ENCODE measurements at regions of chr7 and their contacts with region 1.

Region 1: DNA sequence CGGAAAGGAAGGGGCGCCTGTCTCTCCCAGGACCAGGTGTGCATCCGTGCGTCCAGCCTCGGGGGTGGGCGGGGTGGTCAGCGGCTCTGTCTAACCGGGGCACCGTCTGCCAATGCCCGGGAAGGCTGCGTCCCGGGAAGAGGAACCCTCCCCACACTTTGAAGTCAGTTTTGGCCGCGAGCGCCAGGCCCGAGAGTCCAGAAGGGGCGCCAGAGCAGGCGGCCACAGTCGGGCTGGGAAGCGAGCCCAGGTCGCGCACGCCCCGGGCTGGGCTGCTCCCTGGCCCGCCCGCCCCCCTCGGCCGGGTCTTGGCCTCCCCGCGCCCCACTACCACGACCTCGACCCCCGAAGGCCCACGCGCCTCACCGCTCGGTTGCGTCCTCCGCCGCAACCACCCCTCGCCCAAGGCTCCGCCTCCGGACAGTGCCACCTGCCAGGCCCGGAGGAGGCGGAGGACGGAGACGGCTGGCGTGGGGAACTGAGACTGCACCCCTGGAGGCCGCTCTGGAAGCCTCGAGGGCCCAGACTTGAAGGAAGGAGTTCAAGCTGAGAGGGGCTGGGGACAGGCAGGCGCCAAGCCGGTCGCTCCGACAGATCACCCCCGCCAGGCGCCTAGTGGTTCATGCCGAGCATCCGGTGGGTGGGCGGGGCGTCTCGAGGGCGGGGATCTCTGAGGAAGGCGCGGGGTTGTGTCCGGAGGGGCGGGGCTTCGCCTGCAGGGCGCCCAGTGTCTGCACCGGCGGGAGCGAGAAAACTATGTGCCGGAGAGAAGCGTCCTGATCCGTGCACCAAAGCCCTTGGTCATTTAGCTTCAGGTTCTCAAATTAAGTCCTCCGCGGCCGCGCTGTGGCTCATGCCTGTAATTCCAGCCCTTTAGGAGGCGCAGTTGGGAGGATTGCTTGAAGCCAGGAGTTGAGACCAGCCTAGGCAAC is at the start of gene BRAT1:
- DNase-seq: peak; percentile 93 to 95
- ATAC-seq: peak; percentile 87 to 90
- H3K4me3 ChIP-seq: peak within 1 kb of the TSS; percentile 76 to 97 (median 80)
- H3K27ac ChIP-seq: peak within 1 kb of the TSS; percentile 86 to 100 (median 98)
- H3K4me1 ChIP-seq: peaks cover 29 to 32% of the 10 kb centered on the region in 2 donors
- H3K27me3 ChIP-seq: no peaks in the 10 kb centered on the region
- CTCF ChIP-seq: peak in 4 of 5 experiments; percentile 18 to 57 (median 19)
- POLR2A ChIP-seq: peak; percentile 63 to 64
- total RNA-seq, gene BRAT1: 15.3 to 36.4 (median 20.2) TPM

Region 2: DNA sequence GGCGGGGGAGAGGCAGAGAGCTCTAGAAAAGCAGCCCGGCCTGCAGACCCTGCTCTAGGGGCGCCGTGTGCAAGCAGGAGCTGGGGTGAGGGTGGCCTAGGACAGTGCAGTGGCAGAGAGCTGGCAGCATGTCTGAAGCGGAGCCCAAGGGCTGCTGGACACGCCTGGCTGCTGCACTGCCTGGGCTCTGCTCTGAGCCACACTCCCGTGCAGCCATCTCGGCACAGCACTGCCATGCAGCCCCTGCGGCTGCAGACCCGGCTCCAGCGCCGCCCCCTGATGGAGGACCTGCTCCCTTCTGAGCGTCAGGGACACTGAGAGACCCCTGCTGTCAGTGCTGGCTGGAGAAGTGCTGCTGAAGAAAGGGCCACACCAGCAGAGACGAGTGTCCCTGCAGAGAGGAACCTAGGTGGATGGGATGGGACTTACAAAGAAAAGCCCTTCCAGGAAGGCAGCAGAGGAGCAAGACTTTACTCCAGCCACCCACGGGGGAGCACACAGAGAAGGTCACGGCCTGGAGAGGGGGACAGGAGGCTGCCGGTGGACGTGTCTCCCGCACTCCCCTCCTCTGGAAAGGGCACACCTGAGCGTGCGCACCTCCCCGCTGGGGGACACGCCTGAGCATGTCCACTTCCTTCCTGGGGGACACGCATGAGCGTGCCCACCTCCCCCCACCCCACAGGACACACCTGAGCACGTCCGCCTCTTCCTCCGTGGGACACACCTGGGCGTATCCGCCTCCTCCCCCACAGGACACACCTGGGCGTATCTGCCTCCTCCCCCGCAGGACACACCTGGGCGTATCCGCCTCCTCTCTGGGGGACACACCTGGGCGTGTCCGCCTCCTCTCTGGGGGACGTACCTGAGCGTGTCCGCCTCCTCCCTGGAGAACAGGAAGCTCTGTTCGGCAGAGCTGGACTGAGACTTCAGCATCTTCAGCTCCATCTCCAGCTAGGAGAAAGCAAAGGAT is 575.5 kb before region 1 on chr7:
- in situ Hi-C with region 1: no loop called
- intact Hi-C with region 1: no loop called
- DNase-seq: no peak
- ATAC-seq: no peak
- H3K4me3 ChIP-seq: no peak overlapping the region
- H3K27ac ChIP-seq: no peak overlapping the region
- H3K4me1 ChIP-seq: no peaks in the 10 kb centered on the region
- H3K27me3 ChIP-seq: no peaks in the 10 kb centered on the region
- CTCF ChIP-seq: no peak
- POLR2A ChIP-seq: no peak

Region 3: GRCh38 chr7:2241580-2242540 is 313.5 kb before region 1 on chr7 and contains the starts of genes MRM2 and NUDT1:
- in situ Hi-C with region 1: no loop called
- intact Hi-C with region 1: loop called (anchors 10 kb)
- DNase-seq: peak; percentile 58 to 75
- ATAC-seq: peak; percentile 88
- H3K4me3 ChIP-seq: peak within 1 kb of the TSS; percentile 80 to 97 (median 92)
- H3K27ac ChIP-seq: peak within 1 kb of the TSS; percentile 55 to 85 (median 70)
- H3K4me1 ChIP-seq: peaks cover 12 to 13% of the 10 kb centered on the region in 2 donors
- H3K27me3 ChIP-seq: no peaks in the 10 kb centered on the region
- CTCF ChIP-seq: no peak
- POLR2A ChIP-seq: peak; percentile 39 to 57
- total RNA-seq, gene MRM2: 14.1 to 41.7 (median 16.9) TPM
- total RNA-seq, gene NUDT1: 14.7 to 22.5 (median 18.1) TPM

Region 4: DNA sequence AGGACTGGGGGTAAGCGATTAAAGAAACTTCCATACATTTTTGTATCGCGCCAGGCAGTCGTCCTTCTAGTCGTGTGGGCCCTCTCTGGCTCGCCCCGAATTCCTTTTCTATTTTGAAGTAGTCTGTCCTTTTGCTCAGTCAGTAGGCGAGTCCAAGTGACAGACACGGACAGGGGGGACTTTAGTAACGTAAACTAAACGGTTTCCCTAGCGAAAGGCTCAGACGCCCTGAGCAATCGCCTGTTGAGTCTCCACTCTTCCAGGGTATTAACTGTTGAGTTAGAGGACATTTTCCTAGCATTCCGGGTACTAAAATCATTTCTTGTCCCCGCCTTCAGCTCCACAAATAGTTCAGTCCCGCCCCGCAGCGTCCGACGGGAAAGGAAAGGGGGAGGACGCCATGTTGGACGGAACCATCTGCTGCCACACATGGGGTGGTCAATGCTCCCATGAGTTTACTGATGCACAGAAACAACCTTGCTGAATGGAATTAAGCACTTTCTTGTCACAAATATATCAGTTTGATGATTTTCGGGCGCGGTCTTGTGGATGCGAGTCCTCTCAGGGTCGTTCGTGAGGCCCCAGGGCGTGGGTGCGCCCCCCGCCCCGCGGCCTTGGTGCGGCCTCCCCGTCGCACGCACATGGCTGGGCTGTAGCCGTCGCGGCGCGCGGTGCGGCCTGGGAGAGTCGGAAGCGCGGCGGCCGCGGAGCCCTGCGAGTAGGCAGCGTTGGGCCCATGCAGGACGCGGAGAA is 201.0 kb before region 1 on chr7 and contains the start of gene EIF3B:
- in situ Hi-C with region 1: no loop called
- intact Hi-C with region 1: loop called (anchors 2 kb)
- DNase-seq: peak; percentile 86 to 87
- ATAC-seq: peak; percentile 94 to 95
- H3K4me3 ChIP-seq: peak within 1 kb of the TSS; percentile 80 to 96 (median 88)
- H3K27ac ChIP-seq: peak within 1 kb of the TSS; percentile 90 to 100 (median 94)
- H3K4me1 ChIP-seq: peaks cover 33 to 34% of the 10 kb centered on the region in 2 donors
- H3K27me3 ChIP-seq: no peaks in the 10 kb centered on the region
- CTCF ChIP-seq: peak in 2 of 5 experiments; percentile 24 to 53
- POLR2A ChIP-seq: peak; percentile 73 to 89
- total RNA-seq, gene EIF3B: 105 to 207 (median 195) TPM

Region 5: DNA sequence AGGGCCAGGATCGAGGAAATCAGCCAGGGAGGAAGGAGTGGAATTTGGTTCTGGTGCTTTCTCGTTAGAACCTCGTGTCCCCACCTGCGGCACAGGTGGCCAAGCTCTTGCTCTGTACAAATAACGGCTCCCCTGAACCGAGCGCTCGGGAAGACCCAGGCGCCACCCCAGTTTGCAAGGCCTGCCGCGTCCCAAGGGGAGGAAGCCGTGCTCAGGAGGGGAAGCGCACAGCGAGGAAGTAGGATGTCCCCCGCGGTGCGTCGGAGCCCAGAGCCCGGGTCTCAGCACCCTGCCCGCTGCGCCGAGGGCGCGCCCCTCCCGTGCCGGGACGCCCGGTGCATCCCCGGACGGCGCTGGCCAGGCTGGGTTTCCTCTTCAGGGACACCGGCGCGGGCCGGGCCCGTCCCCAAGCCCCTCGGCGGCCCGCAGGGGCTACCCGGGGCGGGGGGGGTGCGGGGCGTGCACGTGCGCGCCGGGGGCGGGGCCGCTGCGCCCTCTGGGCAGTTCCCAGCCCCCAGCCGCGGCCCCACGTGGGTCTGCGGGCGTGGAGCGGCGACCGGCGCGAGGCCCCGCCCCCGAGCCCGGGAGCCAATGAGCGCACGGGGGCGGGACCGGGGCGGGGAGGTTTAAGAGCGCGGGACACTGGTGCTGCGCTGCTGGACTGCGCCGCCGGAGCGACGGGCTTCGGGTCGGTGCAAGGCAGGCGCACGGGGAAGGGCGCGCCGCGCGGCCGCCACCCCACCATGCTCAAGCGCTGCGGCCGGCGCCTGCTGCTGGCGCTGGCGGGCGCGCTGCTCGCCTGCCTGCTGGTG is 36.1 kb before region 1 on chr7 and contains the start of gene LFNG:
- in situ Hi-C with region 1: no loop called
- intact Hi-C with region 1: loop called (anchors 2 kb)
- DNase-seq: peak; percentile 74 to 77
- ATAC-seq: peak; percentile 85 to 92
- H3K4me3 ChIP-seq: peak within 1 kb of the TSS; percentile 53 to 69 (median 55)
- H3K27ac ChIP-seq: peak within 1 kb of the TSS in 1 of 4 donors; percentile 18
- H3K4me1 ChIP-seq: peaks cover 0 to 25% of the 10 kb centered on the region in 2 donors
- H3K27me3 ChIP-seq: peaks cover 25 to 33% (median 30%) of the 10 kb centered on the region in 3 donors
- CTCF ChIP-seq: no peak
- POLR2A ChIP-seq: peak; percentile 76 to 94
- total RNA-seq, gene LFNG: 1.0 to 5.9 (median 1.7) TPM

Region 6: GRCh38 chr7:2844165-2844898 is 288.9 kb after region 1 on chr7 and contains the start of gene GNA12:
- in situ Hi-C with region 1: no loop called
- intact Hi-C with region 1: loop called (anchors 1 kb)
- DNase-seq: peak; percentile 97 to 99
- ATAC-seq: peak; percentile 98
- H3K4me3 ChIP-seq: peak within 1 kb of the TSS; percentile 53 to 81 (median 67)
- H3K27ac ChIP-seq: peak within 1 kb of the TSS; percentile 60 to 75 (median 74)
- H3K4me1 ChIP-seq: peaks cover 12 to 13% of the 10 kb centered on the region in 2 donors
- H3K27me3 ChIP-seq: no peaks in the 10 kb centered on the region
- CTCF ChIP-seq: no peak
- POLR2A ChIP-seq: peak; percentile 48 to 61
- total RNA-seq, gene GNA12: 7.6 to 8.4 (median 8.1) TPM

Measured in gastrocnemius medialis (tissue), 4 donors.